GM12878 (cell line): ENCODE measurements at regions of chr19 and their contacts with region 1.

Region 1: GRCh38 chr19:3163230-3163886 is 15.2 kb upstream of the S1PR4 start:
- DNase-seq: no peak
- ATAC-seq: peak; percentile 99
- H3K4me3 ChIP-seq: no peak overlapping the region
- H3K27ac ChIP-seq: no peak overlapping the region
- H3K4me1 ChIP-seq: no peaks in the 10 kb centered on the region
- H3K27me3 ChIP-seq: no peaks in the 10 kb centered on the region
- CTCF ChIP-seq: peak; percentile 95 to 99 (median 98); a peak in 5 of 6 replicates
- EP300 ChIP-seq: no peak
- POLR2A ChIP-seq: no peak
- RAD21 ChIP-seq: peak; percentile 94

Region 2: GRCh38 chr19:2840794-2841790 is 322.3 kb before region 1 on chr19 and contains the start of gene ZNF555:
- CTCF ChIA-PET with region 1: no interaction called
- POLR2A ChIA-PET with region 1: no interaction called
- RAD21 ChIA-PET with region 1: no interaction called
- SMC1A ChIA-PET with region 1: no interaction called
- in situ Hi-C with region 1: no loop called
- intact Hi-C with region 1: no loop called
- DNase-seq: peak; percentile 97
- ATAC-seq: peak; percentile 99
- H3K4me3 ChIP-seq: peak within 1 kb of the TSS; percentile 93
- H3K27ac ChIP-seq: peak within 1 kb of the TSS; percentile 79
- H3K4me1 ChIP-seq: peaks cover 3% of the 10 kb centered on the region; the same call in 1 of the 2 replicates
- H3K27me3 ChIP-seq: no peaks in the 10 kb centered on the region
- CTCF ChIP-seq: peak; percentile 48 to 70 (median 48)
- EP300 ChIP-seq: no peak
- POLR2A ChIP-seq: peak; percentile 64
- RAD21 ChIP-seq: no peak
- polyA plus RNA-seq, gene ZNF555: 0.68 to 1.7 TPM

Region 3: DNA sequence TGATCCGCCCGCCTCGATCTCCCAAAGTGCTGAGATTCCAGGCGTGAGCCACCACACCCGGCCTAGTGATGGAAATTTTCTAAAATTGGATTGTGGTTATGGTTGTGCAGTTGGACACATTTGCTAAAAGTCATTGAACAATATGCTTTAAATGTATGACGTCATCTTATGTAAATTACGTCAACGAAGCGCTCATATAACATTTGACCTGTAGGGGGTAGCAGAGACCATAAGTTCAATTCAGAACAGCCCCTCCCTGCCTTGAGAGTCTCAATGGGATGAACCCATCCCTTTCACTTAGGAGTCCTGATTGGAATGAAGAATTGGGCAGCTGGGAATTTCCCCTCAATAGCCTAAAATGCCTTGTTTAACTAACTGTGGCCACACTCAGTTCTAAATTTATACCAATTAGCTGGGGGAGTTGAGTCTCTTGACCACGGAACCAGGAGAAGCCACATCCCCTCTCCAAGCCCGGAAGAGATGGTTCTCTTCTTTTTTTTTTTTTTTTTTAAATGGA is 201.3 kb before region 1 on chr19:
- CTCF ChIA-PET with region 1: interaction called, 4 read pairs
- POLR2A ChIA-PET with region 1: interaction called, 3 read pairs
- RAD21 ChIA-PET with region 1: no interaction called
- SMC1A ChIA-PET with region 1: interaction called, 3 read pairs
- in situ Hi-C with region 1: loop called (anchors 5 kb)
- intact Hi-C with region 1: loop called (anchors 2 kb)
- DNase-seq: peak; percentile 65
- ATAC-seq: peak; percentile 78
- H3K4me3 ChIP-seq: no peak overlapping the region
- H3K27ac ChIP-seq: no peak overlapping the region
- H3K4me1 ChIP-seq: peaks cover 4% of the 10 kb centered on the region; the same call in 1 of the 2 replicates
- H3K27me3 ChIP-seq: no peaks in the 10 kb centered on the region
- CTCF ChIP-seq: peak; percentile 63 to 94 (median 65); a peak in 5 of 6 replicates
- EP300 ChIP-seq: no peak
- POLR2A ChIP-seq: no peak
- RAD21 ChIP-seq: peak; percentile 82

Region 4: DNA sequence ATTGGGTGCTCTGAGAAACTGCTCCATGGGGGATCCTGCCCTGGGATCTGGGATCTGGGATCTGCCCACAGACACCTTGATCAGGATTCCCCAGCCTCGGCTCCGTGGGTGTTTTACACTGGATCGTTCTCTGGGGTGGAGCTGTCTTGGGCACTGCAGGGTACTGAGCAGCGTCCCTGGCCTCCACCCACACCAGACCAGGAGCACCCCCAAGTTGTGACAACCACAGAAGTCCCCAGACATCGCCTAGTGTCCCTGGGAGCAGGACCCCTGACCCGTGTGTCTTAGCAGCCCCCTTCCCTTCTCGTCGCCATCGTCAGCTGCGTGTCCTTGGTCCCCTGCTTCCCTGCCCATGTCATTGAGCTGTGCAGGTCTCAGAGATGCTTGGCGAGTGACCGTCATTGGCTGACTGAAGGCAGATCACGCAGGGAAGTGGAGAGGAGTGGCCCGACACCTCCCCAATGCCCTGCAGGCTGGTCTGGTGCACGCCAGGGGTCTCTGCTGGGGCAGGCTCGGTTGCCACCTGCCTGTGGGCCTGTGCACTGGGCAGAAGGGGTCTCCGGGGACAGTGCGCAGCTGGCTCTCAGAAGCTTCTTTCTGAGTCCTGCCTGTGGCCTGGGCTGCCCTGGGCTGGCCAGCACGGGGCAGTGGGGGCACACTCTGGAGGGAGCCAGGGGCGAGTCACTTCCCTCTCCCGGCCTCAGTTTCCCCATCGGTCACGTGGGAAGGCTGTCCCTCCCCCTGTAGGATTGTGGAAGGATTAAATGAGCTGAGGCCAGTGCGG is 63.1 kb before region 1 on chr19:
- CTCF ChIA-PET with region 1: interaction called, 10 read pairs
- POLR2A ChIA-PET with region 1: no interaction called
- RAD21 ChIA-PET with region 1: no interaction called
- SMC1A ChIA-PET with region 1: interaction called, 3 read pairs
- in situ Hi-C with region 1: no loop called
- intact Hi-C with region 1: no loop called
- DNase-seq: no peak
- ATAC-seq: no peak
- H3K4me3 ChIP-seq: no peak overlapping the region
- H3K27ac ChIP-seq: no peak overlapping the region
- H3K4me1 ChIP-seq: peaks cover 11% of the 10 kb centered on the region
- H3K27me3 ChIP-seq: no peaks in the 10 kb centered on the region; a peak in 2 of 4 replicates
- CTCF ChIP-seq: no peak
- EP300 ChIP-seq: no peak
- POLR2A ChIP-seq: no peak
- RAD21 ChIP-seq: no peak

Region 5: DNA sequence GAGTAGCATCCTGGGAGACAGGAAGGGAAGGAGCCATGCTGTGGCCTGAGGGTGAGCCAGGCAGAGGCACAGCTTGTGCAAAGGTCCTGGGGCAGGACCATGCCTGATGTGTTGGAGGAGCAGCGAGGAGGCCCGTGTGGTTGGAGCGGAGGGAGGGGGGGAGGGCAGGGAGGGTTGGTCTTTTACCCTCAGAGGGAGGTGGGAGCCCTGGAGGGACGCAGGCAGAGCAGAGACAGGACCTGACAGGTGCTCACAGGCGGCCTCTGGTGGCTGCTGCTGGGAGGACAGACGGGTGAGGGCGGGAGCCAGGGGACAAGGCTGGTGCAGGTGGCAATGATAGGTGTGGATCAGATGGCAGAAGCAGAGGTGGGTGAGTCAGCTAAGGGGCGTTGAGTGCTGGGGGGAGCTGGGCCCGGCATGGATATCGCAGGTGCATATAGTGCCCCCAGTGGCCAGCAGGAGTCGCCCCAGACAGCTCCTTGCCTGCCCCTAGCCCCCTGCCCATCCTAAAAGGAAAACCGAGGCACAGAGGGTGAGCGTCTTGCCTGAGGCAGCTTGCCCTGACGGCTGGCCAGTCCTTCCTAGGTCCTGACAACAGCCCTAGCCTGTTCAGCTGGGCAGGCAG is 37.3 kb before region 1 on chr19:
- CTCF ChIA-PET with region 1: interaction called, 35 read pairs
- POLR2A ChIA-PET with region 1: interaction called, 4 read pairs
- RAD21 ChIA-PET with region 1: interaction called, 11 read pairs
- SMC1A ChIA-PET with region 1: interaction called, 35 read pairs
- in situ Hi-C with region 1: no loop called
- intact Hi-C with region 1: loop called (anchors 1 kb)
- DNase-seq: no peak
- ATAC-seq: peak; percentile 91
- H3K4me3 ChIP-seq: no peak overlapping the region
- H3K27ac ChIP-seq: no peak overlapping the region
- H3K4me1 ChIP-seq: peaks cover 17% of the 10 kb centered on the region
- H3K27me3 ChIP-seq: no peaks in the 10 kb centered on the region
- CTCF ChIP-seq: peak; percentile 62 to 92 (median 84)
- EP300 ChIP-seq: no peak
- POLR2A ChIP-seq: no peak
- RAD21 ChIP-seq: peak; percentile 39

Region 6: DNA sequence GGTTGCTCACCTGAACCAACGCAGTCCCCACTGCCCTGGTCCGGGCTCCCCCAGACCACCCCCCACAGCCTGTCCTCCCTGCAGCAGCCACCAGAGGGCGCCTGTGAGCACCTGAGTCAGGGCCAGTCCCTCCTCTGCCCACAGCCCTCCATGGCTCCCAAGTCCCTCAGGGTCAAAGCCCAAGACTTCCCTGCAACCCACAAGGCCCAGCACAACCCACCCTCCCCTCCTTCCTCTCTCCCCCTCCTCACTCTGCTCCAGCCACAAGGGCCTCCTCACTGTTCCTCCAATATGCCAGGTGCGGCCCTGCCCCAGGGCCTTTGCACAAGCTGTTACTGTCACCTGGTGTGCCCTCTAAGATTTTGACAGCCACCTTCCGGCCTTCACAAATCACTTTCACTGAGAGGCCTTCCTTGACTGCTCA is 16.7 kb before region 1 on chr19:
- CTCF ChIA-PET with region 1: interaction called, 7 read pairs
- POLR2A ChIA-PET with region 1: no interaction called
- RAD21 ChIA-PET with region 1: interaction called, 4 read pairs
- SMC1A ChIA-PET with region 1: interaction called, 6 read pairs
- in situ Hi-C with region 1: no loop called
- intact Hi-C with region 1: loop called (anchors 2 kb)
- DNase-seq: no peak
- ATAC-seq: peak; percentile 80
- H3K4me3 ChIP-seq: no peak overlapping the region
- H3K27ac ChIP-seq: no peak overlapping the region
- H3K4me1 ChIP-seq: peaks cover 15% of the 10 kb centered on the region
- H3K27me3 ChIP-seq: no peaks in the 10 kb centered on the region
- CTCF ChIP-seq: peak; percentile 60 to 97 (median 79)
- EP300 ChIP-seq: no peak
- POLR2A ChIP-seq: no peak
- RAD21 ChIP-seq: peak; percentile 44

Region 7: DNA sequence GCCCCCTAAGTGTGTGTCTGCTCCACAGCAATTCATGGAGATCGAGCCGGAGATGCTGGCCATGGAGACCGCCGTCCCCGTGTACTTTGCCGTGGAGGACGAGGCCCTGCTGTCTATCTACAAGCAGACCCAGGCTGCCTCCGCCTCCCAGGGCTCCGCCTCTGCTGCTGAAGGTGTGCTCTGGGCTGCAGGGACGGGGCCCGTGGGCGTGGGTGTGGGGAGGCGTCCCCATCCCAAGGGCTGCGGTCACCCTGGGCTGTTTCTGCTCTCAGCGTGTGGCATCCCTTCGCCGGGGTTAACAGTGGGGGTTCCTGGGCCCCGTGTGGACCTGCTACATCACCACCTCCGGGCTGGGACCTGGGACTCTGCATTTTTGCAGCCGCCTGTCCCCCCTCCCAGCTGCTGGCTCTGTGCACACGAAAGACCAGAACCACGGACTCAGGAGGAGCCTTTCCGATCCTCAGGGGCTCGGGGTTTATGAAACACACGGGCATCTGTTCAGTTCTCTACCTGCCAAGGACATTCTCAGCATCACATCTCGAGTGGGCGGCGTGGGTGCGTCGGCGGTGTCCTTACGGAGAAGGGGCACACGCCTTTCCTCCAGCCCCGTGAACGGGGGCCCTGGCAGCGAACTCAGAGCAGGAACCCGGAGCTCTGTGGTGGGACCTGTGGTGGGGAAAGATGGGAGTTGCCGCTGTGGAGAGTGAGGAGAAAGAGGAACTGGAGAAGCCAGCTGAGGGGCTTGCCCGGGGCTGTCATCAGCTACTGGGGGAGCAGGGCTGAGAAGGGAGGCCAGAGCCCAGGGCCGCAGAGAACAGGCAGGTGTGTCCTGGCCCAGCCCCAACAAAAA is 30.1 kb after region 1 on chr19:
- CTCF ChIA-PET with region 1: no interaction called
- POLR2A ChIA-PET with region 1: no interaction called
- RAD21 ChIA-PET with region 1: no interaction called
- SMC1A ChIA-PET with region 1: no interaction called
- in situ Hi-C with region 1: no loop called
- intact Hi-C with region 1: no loop called
- DNase-seq: no peak
- ATAC-seq: no peak
- H3K4me3 ChIP-seq: no peak overlapping the region
- H3K27ac ChIP-seq: no peak overlapping the region
- H3K4me1 ChIP-seq: no peaks in the 10 kb centered on the region
- H3K27me3 ChIP-seq: no peaks in the 10 kb centered on the region
- CTCF ChIP-seq: no peak
- EP300 ChIP-seq: no peak
- POLR2A ChIP-seq: no peak
- RAD21 ChIP-seq: no peak

Region 8: DNA sequence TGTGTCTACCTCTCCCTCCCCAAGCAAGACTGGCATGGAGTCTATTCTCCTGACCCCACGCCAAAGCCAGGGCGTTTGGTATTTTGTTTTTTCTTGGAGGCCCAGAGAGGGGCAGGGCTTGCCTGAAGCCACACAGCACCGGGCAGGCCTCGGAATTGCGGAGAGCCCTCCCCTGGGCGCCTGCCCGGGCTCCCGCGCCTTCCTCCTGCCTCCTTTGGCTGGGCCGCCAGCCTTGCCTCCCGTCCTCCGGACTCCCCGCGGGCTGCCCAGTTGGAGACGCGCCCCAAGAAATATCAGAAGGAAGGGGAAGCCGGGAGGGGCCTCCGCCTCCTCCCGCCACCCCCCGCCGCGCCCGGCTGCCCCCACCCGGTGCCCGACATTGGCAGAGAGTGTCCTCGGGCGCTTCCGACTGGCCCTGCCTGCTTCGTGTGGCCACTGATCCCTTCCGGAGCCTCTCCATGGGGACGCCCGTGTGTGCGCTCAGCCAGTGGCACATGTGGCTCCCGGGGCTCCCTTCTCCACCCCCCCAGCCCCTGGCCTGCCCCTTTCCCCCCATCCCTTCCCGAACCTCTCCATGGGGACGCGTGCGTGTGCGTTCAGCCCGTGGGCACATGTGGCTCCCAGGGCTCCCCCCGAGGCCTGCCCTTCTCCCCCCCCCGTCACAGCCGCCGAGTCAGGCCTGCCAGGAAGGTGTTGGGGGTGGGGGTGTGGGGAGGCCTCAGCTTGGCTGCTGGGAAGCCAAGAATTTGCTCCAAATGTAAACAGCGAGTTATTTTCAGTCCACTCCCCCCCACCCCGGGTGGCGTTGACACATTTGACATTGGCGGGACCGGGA is 240.3 kb after region 1 on chr19:
- CTCF ChIA-PET with region 1: no interaction called
- POLR2A ChIA-PET with region 1: no interaction called
- RAD21 ChIA-PET with region 1: no interaction called
- SMC1A ChIA-PET with region 1: no interaction called
- in situ Hi-C with region 1: no loop called
- intact Hi-C with region 1: no loop called
- DNase-seq: no peak
- ATAC-seq: no peak
- H3K4me3 ChIP-seq: no peak overlapping the region
- H3K27ac ChIP-seq: no peak overlapping the region
- H3K4me1 ChIP-seq: no peaks in the 10 kb centered on the region
- H3K27me3 ChIP-seq: no peaks in the 10 kb centered on the region
- CTCF ChIP-seq: no peak
- EP300 ChIP-seq: no peak
- POLR2A ChIP-seq: no peak
- RAD21 ChIP-seq: no peak